PC-9 (cell line): ENCODE measurements at regions of chr9 and their contacts with region 1.

Region 1: DNA sequence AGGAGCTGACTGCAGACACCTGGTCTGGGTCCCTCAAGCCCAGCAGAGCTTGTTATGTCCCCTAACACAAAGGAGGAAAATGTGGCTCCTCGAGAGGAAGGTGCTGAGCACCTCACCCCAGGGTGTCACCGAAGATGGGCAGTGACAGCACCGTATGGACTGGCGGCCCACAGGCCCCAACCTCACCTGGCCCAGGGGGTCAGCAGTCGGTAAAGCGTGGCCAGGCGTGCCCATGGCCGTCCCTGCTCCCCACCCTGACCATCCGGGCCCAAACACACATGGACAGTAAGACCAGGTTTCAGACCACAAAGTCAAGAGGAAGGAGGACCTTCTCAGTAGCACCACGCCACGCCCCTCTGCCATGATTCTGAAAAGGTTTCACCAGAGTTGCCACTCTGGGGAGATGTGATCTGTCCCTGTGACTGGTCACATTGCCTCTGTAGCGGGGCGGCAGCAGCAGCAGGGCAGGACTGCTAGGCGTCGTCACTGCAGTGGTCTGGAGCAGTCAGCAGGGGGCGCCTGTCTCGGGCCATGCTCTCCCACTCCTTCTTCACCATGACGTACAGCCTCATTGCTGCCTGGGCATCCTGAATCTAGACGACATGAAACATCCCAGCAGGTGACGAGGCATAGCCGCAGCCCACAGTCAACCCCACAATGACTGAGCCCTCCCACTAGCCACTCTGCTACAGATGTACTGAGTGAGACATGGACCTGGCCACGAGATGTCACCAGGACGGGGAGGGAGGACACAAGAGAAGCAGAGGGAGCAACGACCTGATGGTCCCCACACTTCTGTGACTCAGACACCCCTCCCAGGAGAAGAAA is 11.1 kb downstream of the REXO4 start:
- DNase-seq: peak; percentile 37 to 74
- H3K4me3 ChIP-seq: no peak overlapping the region
- H3K27ac ChIP-seq: no peak overlapping the region
- H3K4me1 ChIP-seq: no peaks in the 10 kb centered on the region
- H3K27me3 ChIP-seq: no peaks in the 10 kb centered on the region
- CTCF ChIP-seq: peak; percentile 89

Region 2: GRCh38 chr9:133335878-133336811 is 70.5 kb before region 1 on chr9 and contains the start of gene SURF6:
- CTCF ChIA-PET with region 1: no interaction called
- POLR2A ChIA-PET with region 1: no interaction called
- intact Hi-C with region 1: loop called (anchors 5 kb)
- DNase-seq: peak; percentile 76 to 92
- H3K4me3 ChIP-seq: peak within 1 kb of the TSS; percentile 94
- H3K27ac ChIP-seq: peak within 1 kb of the TSS; percentile 48
- H3K4me1 ChIP-seq: peaks cover 15% of the 10 kb centered on the region
- H3K27me3 ChIP-seq: no peaks in the 10 kb centered on the region
- CTCF ChIP-seq: no peak
- total RNA-seq, gene SURF6: 21.2 and 29.8 TPM in 2 replicates